HCT116 (cell line): ENCODE measurements at regions of chr4 and their contacts with region 1.

Region 1: DNA sequence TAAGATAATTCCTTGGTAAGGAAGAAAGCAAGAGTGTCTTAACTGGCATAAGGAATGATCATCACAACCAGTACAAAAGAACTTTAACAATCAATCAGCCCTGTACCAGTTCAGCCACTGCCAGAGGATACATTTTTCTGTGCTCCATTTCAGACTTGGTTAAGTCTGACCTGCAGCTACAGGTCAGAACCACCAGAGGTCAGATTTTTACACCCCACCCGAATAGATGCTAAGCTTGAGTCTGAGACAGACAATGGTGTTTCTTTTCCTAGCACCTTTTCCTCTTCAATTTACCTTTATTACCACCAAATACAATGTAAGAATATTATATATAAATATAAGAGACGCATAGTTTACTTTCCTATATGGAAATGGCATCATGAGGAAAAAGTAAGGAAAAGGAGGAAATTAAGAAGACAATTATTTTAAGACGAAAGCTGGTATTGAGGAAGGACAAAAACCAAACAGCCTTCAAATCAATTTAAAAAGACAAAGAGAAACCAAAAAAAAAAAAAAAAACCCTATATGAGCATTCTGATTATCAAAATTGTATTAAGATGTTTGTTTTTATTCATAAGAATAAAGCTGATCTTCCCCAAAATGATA is 215.3 kb upstream of the TTC29 start:
- DNase-seq: peak; percentile 36
- ATAC-seq: peak; percentile 94
- H3K4me3 ChIP-seq: no peak overlapping the region
- H3K27ac ChIP-seq: no peak overlapping the region
- H3K4me1 ChIP-seq: no peaks in the 10 kb centered on the region
- H3K27me3 ChIP-seq: no peaks in the 10 kb centered on the region
- CTCF ChIP-seq: peak; percentile 77 to 80 (median 77)
- POLR2A ChIP-seq: no peak
- RAD21 ChIP-seq: peak; percentile 88

Region 2: GRCh38 chr4:146945556-146946374 is 215.2 kb before region 1 on chr4 and contains the start of gene TTC29:
- CTCF ChIA-PET with region 1: no interaction called
- POLR2A ChIA-PET with region 1: no interaction called
- RAD21 ChIA-PET with region 1: no interaction called
- intact Hi-C with region 1: no loop called
- DNase-seq: peak; percentile 28
- ATAC-seq: peak; percentile 100
- H3K4me3 ChIP-seq: 0 out of 4 replicates have a peak within 1 kb of the TSS, but pooled peaks of 1 of the 2 experiments have one; percentile 10
- H3K27ac ChIP-seq: no peak within 1 kb of the TSS
- H3K4me1 ChIP-seq: peaks cover 0 to 8% of the 10 kb centered on the region in 2 experiments; a peak in 1 of 4 replicates
- H3K27me3 ChIP-seq: peaks cover 66% of the 10 kb centered on the region
- CTCF ChIP-seq: no peak
- POLR2A ChIP-seq: no peak
- RAD21 ChIP-seq: no peak
- total RNA-seq, gene TTC29: not detected

Region 3: GRCh38 chr4:147223576-147223975 is 62.6 kb after region 1 on chr4:
- CTCF ChIA-PET with region 1: no interaction called
- POLR2A ChIA-PET with region 1: no interaction called
- RAD21 ChIA-PET with region 1: no interaction called
- intact Hi-C with region 1: no loop called
- DNase-seq: no peak
- ATAC-seq: no peak
- H3K4me3 ChIP-seq: no peak overlapping the region
- H3K27ac ChIP-seq: no peak overlapping the region
- H3K4me1 ChIP-seq: no peaks in the 10 kb centered on the region
- H3K27me3 ChIP-seq: no peaks in the 10 kb centered on the region
- CTCF ChIP-seq: no peak
- POLR2A ChIP-seq: no peak
- RAD21 ChIP-seq: no peak

Region 4: DNA sequence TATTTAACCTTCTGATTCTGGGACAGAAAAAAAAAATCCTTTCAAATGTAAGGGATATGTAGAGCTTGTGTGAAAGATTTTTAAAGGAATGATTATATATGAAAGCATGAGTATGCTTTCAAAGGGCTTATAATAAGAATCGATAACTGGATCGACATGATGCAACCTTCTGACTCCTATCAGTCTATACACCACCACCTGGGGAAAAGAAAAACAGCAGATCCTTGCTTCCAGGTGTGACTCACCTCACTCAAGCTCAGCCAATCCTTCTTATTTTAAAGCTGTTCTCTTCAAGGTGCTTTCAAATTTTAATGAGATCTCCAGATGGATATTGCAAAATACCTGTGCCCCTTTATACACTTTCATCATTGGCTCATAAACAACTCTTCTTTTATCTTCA is 217.8 kb after region 1 on chr4:
- CTCF ChIA-PET with region 1: interaction called, 13 read pairs
- POLR2A ChIA-PET with region 1: no interaction called
- RAD21 ChIA-PET with region 1: no interaction called
- intact Hi-C with region 1: loop called (anchors 5 kb)
- DNase-seq: peak; percentile 63
- ATAC-seq: peak; percentile 86
- H3K4me3 ChIP-seq: no peak overlapping the region
- H3K27ac ChIP-seq: no peak overlapping the region
- H3K4me1 ChIP-seq: peaks cover 0 to 8% of the 10 kb centered on the region in 2 experiments; a peak in 2 of 4 replicates
- H3K27me3 ChIP-seq: no peaks in the 10 kb centered on the region
- CTCF ChIP-seq: peak; percentile 34 to 49 (median 45); a peak in 4 of 6 replicates
- POLR2A ChIP-seq: no peak
- RAD21 ChIP-seq: peak; percentile 56

Region 5: GRCh38 chr4:147518846-147519767 is 358.1 kb after region 1 on chr4:
- CTCF ChIA-PET with region 1: interaction called, 11 read pairs
- POLR2A ChIA-PET with region 1: no interaction called
- RAD21 ChIA-PET with region 1: interaction called in 1 of 2 experiments, 3 read pairs
- intact Hi-C with region 1: loop called (anchors 2 kb)
- DNase-seq: peak; percentile 59
- ATAC-seq: peak; percentile 92
- H3K4me3 ChIP-seq: no peak overlapping the region
- H3K27ac ChIP-seq: no peak overlapping the region
- H3K4me1 ChIP-seq: no peaks in the 10 kb centered on the region
- H3K27me3 ChIP-seq: no peaks in the 10 kb centered on the region
- CTCF ChIP-seq: peak; percentile 65 to 96 (median 95); a peak in 5 of 6 replicates
- POLR2A ChIP-seq: no peak
- RAD21 ChIP-seq: peak; percentile 78